Activated CD4-positive, alpha-beta memory T cell treated with anti-CD3 and anti-CD28 coated beads, Interleukin-2, amount 10 ng/mL, durations not matched to agents 7 days and 5 days (primary cell): ENCODE measurements at regions of chr1 and their contacts with region 1.

Region 1: GRCh38 chr1:8431019-8431418 is 113.1 kb downstream of the SLC45A1 start:
- DNase-seq: peak; percentile 37
- H3K4me3 Mint-ChIP-seq: no peak overlapping the region
- H3K27ac Mint-ChIP-seq: peak overlapping the region; percentile 73
- H3K4me1 Mint-ChIP-seq: peaks cover 57% of the 10 kb centered on the region
- H3K27me3 Mint-ChIP-seq: no peaks in the 10 kb centered on the region

Region 2: DNA sequence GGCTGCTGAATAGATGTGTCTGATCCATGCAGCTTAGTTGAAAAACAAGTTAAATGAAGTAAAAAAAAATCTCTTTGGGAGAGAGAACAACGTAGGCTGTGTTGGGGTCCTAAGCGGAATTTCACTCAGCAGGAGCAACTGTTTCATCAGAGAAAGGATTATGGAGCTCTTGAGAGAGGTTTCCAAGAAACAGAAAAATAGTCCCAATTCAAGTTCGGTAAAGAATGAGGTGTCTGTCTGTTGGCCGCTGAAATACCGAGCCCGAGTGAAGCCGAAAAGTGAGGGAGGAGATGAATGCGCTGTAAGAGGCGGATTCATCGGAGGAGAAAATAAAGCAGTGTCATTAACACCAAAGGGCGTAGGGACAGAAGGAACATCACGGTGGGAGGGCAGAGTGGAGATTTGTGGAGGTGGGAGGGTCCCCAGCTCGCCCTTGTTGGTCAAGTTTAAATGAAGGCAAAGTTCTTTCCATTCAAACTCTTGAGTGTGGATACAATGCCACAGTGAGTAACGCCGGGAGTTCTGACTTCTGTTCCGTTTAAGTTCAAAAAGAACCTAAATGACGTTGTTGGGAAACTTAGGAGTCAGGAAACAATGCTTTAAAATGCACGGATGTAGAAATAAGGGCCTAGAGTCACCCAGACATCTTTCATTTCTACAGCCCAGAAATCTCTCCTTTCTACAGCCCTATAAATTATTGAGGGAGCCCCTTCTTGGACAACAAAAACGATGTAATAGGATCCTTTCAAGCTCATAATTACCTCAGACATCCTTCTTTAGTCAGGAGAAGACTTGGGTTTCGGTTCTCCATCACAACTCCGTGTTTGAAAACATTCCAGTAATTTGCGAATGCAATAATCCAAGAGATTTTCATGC is 128.7 kb before region 1 on chr1:
- CTCF ChIA-PET with region 1: no interaction called
- POLR2A ChIA-PET with region 1: no interaction called
- DNase-seq: no peak
- H3K4me3 Mint-ChIP-seq: no peak overlapping the region
- H3K27ac Mint-ChIP-seq: no peak overlapping the region
- H3K4me1 Mint-ChIP-seq: no peaks in the 10 kb centered on the region
- H3K27me3 Mint-ChIP-seq: peaks cover 5% of the 10 kb centered on the region

Region 3: DNA sequence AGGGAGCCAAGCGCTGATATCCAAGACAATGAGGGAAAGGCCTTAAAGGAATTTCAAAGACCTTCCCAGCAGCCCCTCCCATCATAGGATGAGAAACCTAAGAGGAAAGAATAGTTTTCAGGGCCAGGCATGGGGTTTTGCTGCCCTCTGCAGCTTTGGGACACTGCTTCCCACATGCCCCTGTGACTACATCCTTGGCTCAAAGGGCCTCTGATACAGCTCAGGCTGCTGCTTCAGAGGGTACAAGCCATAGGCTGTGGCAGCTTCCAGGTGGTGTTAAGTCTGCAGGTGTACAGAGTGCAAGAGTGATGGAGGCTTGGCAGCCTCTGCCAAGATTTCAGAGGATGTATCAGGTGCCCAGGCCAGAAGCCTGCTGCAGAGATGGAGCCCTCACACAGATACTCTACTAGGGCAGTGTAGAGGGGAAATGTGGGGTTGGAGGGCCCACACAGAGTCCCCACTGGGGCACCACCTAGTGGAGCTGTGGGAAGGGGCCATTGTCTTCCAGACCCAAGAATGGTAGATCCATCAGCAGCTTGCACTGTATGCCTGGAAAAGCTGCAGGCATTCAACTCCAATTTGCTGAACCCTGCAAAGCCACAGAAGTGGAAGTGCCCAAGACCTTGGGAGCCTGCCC is 12.7 kb after region 1 on chr1:
- CTCF ChIA-PET with region 1: interaction called, 11 read pairs
- POLR2A ChIA-PET with region 1: interaction called, 3 read pairs
- DNase-seq: no peak
- H3K4me3 Mint-ChIP-seq: no peak overlapping the region
- H3K27ac Mint-ChIP-seq: no peak overlapping the region
- H3K4me1 Mint-ChIP-seq: peaks cover 26% of the 10 kb centered on the region
- H3K27me3 Mint-ChIP-seq: peaks cover 2% of the 10 kb centered on the region

Region 4: GRCh38 chr1:8482979-8483391 is 52.0 kb after region 1 on chr1:
- CTCF ChIA-PET with region 1: no interaction called
- POLR2A ChIA-PET with region 1: no interaction called
- DNase-seq: no peak
- H3K4me3 Mint-ChIP-seq: no peak overlapping the region
- H3K27ac Mint-ChIP-seq: no peak overlapping the region
- H3K4me1 Mint-ChIP-seq: peaks cover 7% of the 10 kb centered on the region
- H3K27me3 Mint-ChIP-seq: no peaks in the 10 kb centered on the region